A549 (cell line): ENCODE measurements at regions of chr11 and their contacts with region 1.

Region 1: DNA sequence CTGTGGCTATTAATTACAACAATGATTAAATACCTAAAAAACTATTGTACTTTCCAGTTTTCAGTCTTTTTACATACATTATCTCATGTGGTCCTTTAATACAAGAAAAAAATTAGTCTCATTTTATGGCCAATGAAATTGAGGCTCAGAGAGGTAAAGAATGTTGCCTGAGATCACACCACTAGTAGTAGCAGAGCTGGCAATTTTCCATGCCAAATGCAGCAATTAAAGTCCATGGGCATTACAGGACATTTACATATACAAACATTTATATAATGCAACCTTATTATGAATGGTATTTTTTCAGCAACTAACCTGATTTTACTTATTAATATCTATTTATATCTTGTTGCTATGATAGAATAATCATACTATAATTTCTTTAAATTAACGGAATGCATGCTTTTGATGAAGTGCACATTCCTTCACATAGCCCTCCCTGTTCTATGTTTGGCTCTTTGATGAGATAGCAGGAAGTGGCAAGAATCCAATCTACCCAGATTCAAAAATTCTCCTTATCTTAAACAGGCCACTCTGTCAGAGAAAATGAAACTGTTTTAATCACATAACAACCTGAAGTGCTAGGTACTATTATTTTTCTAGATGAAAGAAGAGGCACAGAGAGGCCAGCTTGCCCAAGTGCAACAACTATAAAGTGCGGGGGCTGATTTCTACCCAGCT is 120.9 kb upstream of the LDLRAD3 start:
- DNase-seq: no peak
- ATAC-seq: no peak
- H3K4me3 ChIP-seq: no peak overlapping the region
- H3K27ac ChIP-seq: no peak overlapping the region
- H3K4me1 ChIP-seq: no peaks in the 10 kb centered on the region
- CTCF ChIP-seq: no peak
- EP300 ChIP-seq: no peak
- POLR2A ChIP-seq: no peak
- RAD21 ChIP-seq: no peak

Region 2: DNA sequence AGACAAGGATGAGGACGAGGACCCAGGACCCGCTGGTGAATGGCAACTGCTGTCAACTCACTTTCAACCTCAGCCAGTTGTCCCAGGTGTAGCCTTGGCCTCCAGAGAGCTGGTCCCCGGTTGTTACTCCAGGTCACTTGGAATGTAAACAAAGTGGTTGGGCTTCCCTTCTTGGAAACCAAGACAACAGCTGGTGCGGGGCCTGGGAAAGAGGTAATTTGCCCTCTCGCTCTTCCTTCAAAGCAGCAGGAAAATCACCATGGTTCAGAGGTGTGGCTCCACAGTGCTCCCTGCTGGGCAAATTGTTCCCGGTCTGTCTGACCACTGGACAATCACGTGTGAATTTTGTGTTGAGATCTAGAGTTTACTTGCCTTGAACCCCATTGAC is 418.6 kb before region 1 on chr11:
- CTCF ChIA-PET with region 1: no interaction called
- POLR2A ChIA-PET with region 1: no interaction called
- DNase-seq: peak; percentile 48 to 54
- ATAC-seq: peak; percentile 69 to 89
- H3K4me3 ChIP-seq: 0 out of 3 replicates have a peak overlapping the region, but pooled peaks have one; percentile 18
- H3K27ac ChIP-seq: peak overlapping the region in 1 of 2 experiments; percentile 62; a peak in 3 of 6 replicates
- H3K4me1 ChIP-seq: 0 out of 3 replicates have a peak, but pooled peaks cover 7% of the 10 kb centered on the region
- CTCF ChIP-seq: peak; percentile 72
- EP300 ChIP-seq: no peak
- POLR2A ChIP-seq: no peak
- RAD21 ChIP-seq: peak; percentile 75 to 78

Region 3: GRCh38 chr11:35511666-35512065 is 311.3 kb before region 1 on chr11:
- CTCF ChIA-PET with region 1: no interaction called
- POLR2A ChIA-PET with region 1: no interaction called
- DNase-seq: peak; percentile 23 to 25
- ATAC-seq: peak; percentile 62 to 74
- H3K4me3 ChIP-seq: no peak overlapping the region
- H3K27ac ChIP-seq: 0 out of 6 replicates have a peak overlapping the region, but pooled peaks of 1 of the 2 experiments have one; percentile 10
- H3K4me1 ChIP-seq: 0 out of 3 replicates have a peak, but pooled peaks cover 4% of the 10 kb centered on the region
- CTCF ChIP-seq: no peak
- EP300 ChIP-seq: no peak
- POLR2A ChIP-seq: no peak
- RAD21 ChIP-seq: no peak

Region 4: DNA sequence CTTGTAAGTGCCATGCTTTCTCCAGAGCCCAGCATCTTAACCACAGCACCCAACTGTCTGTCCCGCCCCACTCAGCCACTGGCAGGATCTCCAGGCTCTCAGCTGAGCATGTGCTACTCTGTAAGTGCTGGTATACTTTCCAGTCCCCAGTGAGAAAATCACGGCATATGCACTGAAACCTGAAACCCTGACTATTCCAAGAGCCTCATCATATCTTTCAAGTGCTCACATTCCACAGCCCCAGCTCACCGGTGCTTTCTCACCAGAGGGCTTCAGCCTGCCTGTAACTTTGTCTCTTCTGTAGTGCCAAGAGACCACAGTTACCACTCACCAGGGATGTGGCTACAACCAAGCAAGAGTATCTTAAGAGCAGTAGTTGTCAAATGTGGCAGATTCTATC is 273.2 kb before region 1 on chr11:
- CTCF ChIA-PET with region 1: no interaction called
- POLR2A ChIA-PET with region 1: no interaction called
- DNase-seq: peak in 1 of 2 experiments; percentile 16
- ATAC-seq: peak; percentile 70 to 73; a peak in 5 of 6 replicates
- H3K4me3 ChIP-seq: no peak overlapping the region
- H3K27ac ChIP-seq: 0 out of 6 replicates have a peak overlapping the region, but pooled peaks of 1 of the 2 experiments have one; percentile 5
- H3K4me1 ChIP-seq: 0 out of 3 replicates have a peak, but pooled peaks cover 3% of the 10 kb centered on the region
- CTCF ChIP-seq: no peak
- EP300 ChIP-seq: no peak
- POLR2A ChIP-seq: no peak
- RAD21 ChIP-seq: no peak

Region 5: DNA sequence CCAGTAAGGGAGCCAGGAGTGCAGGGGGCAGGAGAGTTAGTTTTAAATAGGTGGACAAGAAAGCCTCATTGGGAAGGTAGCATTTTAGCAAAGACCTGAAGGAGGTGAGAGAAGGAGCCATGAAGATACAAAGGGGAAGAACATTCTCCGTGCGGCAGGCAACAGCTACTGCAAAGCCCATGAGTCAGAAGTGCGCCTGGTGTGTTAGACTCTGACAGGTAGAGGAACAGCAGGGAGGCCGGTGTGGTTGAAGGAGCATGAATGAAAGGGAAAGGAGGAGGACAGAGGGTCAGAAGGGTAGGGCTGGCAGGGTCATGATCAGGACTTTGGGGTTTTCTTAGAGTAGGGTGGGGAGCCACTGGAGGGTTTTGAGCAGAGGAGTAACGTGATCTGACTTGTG is 263.0 kb before region 1 on chr11:
- CTCF ChIA-PET with region 1: no interaction called
- POLR2A ChIA-PET with region 1: no interaction called
- DNase-seq: no peak
- ATAC-seq: no peak
- H3K4me3 ChIP-seq: no peak overlapping the region
- H3K27ac ChIP-seq: no peak overlapping the region
- H3K4me1 ChIP-seq: no peaks in the 10 kb centered on the region
- CTCF ChIP-seq: no peak
- EP300 ChIP-seq: no peak
- POLR2A ChIP-seq: no peak
- RAD21 ChIP-seq: no peak

Region 6: GRCh38 chr11:35605711-35606110 is 217.2 kb before region 1 on chr11:
- CTCF ChIA-PET with region 1: interaction called, 16 read pairs
- POLR2A ChIA-PET with region 1: no interaction called
- DNase-seq: no peak
- ATAC-seq: no peak
- H3K4me3 ChIP-seq: no peak overlapping the region
- H3K27ac ChIP-seq: no peak overlapping the region
- H3K4me1 ChIP-seq: no peaks in the 10 kb centered on the region
- CTCF ChIP-seq: no peak
- EP300 ChIP-seq: no peak
- POLR2A ChIP-seq: no peak
- RAD21 ChIP-seq: no peak

Region 7: GRCh38 chr11:35800970-35801953 is 21.7 kb before region 1 on chr11:
- CTCF ChIA-PET with region 1: interaction called, 28 read pairs
- POLR2A ChIA-PET with region 1: no interaction called
- DNase-seq: no peak
- ATAC-seq: no peak
- H3K4me3 ChIP-seq: no peak overlapping the region
- H3K27ac ChIP-seq: no peak overlapping the region
- H3K4me1 ChIP-seq: peaks cover 29% of the 10 kb centered on the region
- CTCF ChIP-seq: no peak
- EP300 ChIP-seq: no peak
- POLR2A ChIP-seq: no peak
- RAD21 ChIP-seq: no peak

Region 8: GRCh38 chr11:35847473-35847872 is 24.5 kb after region 1 on chr11:
- CTCF ChIA-PET with region 1: interaction called, 13 read pairs
- POLR2A ChIA-PET with region 1: no interaction called
- DNase-seq: no peak
- ATAC-seq: no peak; a peak in 1 of 6 replicates
- H3K4me3 ChIP-seq: no peak overlapping the region
- H3K27ac ChIP-seq: no peak overlapping the region
- H3K4me1 ChIP-seq: no peaks in the 10 kb centered on the region
- CTCF ChIP-seq: no peak
- EP300 ChIP-seq: no peak
- POLR2A ChIP-seq: no peak
- RAD21 ChIP-seq: no peak

Region 9: DNA sequence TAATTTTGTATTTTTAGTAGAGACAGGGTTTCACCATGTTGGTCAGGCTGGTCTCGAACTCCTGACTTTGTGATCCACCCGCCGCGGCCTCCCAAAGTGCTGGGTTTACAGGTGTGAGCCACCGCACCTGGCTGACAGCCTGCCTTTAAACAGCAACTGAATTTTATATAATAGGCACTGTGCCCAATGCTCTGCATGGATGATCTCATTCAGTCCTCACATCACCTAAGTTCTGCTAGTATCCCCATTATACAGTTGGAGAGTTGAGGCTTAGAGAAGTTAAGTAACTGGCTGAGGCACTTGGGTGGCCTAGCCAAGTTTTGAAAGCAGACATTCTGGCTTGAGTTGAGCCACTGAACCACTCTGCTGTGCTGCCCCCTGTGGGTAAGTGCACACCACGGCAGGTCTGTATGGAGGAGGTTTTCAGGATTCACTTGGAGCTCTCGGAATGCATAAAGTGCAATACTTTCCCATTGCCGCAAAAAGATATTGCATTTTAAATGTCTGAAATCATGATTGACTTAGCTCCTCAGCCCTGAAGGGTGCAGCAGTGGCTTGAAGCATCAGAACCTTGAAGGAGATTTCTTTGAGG is 233.3 kb after region 1 on chr11:
- CTCF ChIA-PET with region 1: interaction called, 18 read pairs
- POLR2A ChIA-PET with region 1: no interaction called
- DNase-seq: peak; percentile 25 to 38
- ATAC-seq: peak; percentile 66 to 80; a peak in 5 of 6 replicates
- H3K4me3 ChIP-seq: no peak overlapping the region
- H3K27ac ChIP-seq: no peak overlapping the region
- H3K4me1 ChIP-seq: no peaks in the 10 kb centered on the region
- CTCF ChIP-seq: peak; percentile 41
- EP300 ChIP-seq: no peak
- POLR2A ChIP-seq: no peak
- RAD21 ChIP-seq: peak; percentile 48 to 56; a peak in 4 of 5 replicates

Region 10: GRCh38 chr11:36131721-36132397 is 308.9 kb after region 1 on chr11:
- CTCF ChIA-PET with region 1: interaction called, 73 read pairs
- POLR2A ChIA-PET with region 1: interaction called, 3 read pairs
- DNase-seq: peak in 1 of 2 experiments; percentile 41
- ATAC-seq: peak; percentile 70 to 86; a peak in 3 of 6 replicates
- H3K4me3 ChIP-seq: no peak overlapping the region
- H3K27ac ChIP-seq: no peak overlapping the region
- H3K4me1 ChIP-seq: peaks cover 4% of the 10 kb centered on the region; the same call in 1 of the 3 replicates
- CTCF ChIP-seq: peak; percentile 71
- EP300 ChIP-seq: no peak
- POLR2A ChIP-seq: no peak
- RAD21 ChIP-seq: peak; percentile 66 to 72

Region 11: DNA sequence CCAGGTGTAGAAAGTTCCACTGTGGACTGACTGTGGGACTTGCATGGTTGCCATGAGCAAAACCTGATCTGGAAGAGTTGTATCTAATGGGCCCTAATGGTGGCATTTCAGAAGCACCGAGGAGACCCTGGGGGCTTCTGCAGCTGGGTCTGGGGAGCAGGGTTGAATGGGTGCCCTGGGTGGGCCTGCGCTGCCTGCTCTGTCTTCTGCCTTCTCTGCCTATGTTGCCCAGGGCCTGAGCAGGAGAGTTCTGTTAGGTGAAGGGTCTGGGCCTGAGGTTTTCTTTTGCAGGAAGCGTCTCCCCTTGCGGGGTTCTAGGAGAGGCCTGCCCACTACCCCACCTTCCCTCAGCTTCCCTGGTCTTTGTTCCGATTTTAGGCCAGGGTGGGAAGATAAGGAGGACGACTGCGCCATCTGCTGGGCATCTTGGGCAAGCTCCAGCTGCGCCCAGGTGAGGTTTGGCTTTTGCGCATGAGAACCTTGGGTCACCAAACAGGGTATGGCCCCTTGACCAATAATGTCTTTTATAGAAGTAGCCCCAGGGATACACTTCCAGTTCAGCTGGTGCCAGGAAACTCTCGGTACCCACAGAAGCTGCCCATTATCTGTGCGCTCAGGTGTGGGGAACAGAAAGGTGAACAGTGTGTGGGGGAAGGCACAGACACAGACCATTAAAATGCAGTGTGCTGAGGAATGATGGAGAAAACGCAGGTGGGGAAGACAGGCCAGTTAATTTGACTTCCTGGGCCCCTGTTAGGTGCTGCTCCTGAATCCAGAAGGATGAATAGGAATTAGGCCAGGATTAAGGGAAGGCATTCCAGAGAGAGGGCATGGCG is 443.1 kb after region 1 on chr11:
- CTCF ChIA-PET with region 1: interaction called, 94 read pairs
- POLR2A ChIA-PET with region 1: no interaction called
- DNase-seq: peak; percentile 55 to 62
- ATAC-seq: peak; percentile 75 to 93
- H3K4me3 ChIP-seq: no peak overlapping the region
- H3K27ac ChIP-seq: no peak overlapping the region
- H3K4me1 ChIP-seq: no peaks in the 10 kb centered on the region
- CTCF ChIP-seq: peak; percentile 86
- EP300 ChIP-seq: no peak
- POLR2A ChIP-seq: no peak
- RAD21 ChIP-seq: peak; percentile 93